ENCODE measurements at regions of chr2 and their contacts with region 1.

Region 1: DNA sequence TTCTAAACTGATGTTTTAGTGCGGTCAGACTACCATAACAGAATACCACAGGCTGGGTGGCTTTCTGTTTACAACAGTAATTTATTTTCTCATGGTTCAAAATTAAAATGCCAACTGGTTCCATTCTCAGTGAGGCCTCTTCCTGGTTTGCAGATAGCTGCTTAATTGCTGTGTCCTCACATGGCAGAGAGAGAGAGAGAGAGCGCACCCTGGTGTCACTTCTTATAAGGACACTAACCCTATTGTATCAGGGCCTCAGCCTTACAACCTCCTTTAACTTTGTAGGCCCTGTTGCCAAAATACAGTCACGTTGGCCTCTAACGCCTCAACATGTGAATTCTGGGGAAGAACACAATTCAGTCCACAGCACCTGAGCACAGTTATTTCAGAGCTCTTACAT is 37.5 kb upstream of the ZNF385B start:
- DNase-seq: peak; percentile 67
- ATAC-seq: peak; percentile 100
- H3K4me3 Mint-ChIP-seq: no peak overlapping the region
- H3K27ac Mint-ChIP-seq: no peak overlapping the region
- H3K4me1 Mint-ChIP-seq: peaks cover 4% of the 10 kb centered on the region
- H3K27me3 Mint-ChIP-seq: no peaks in the 10 kb centered on the region
- CTCF ChIP-seq: 0 out of 2 replicates have a peak, but pooled peaks have one; percentile 35

Region 2: GRCh38 chr2:179830043-179830787 is 68.7 kb before region 1 on chr2:
- CTCF ChIA-PET with region 1: no interaction called
- POLR2A ChIA-PET with region 1: no interaction called
- DNase-seq: no peak
- ATAC-seq: no peak
- H3K4me3 Mint-ChIP-seq: no peak overlapping the region
- H3K27ac Mint-ChIP-seq: no peak overlapping the region
- H3K4me1 Mint-ChIP-seq: peaks cover 31% of the 10 kb centered on the region
- H3K27me3 Mint-ChIP-seq: no peaks in the 10 kb centered on the region
- CTCF ChIP-seq: no peak

Region 3: DNA sequence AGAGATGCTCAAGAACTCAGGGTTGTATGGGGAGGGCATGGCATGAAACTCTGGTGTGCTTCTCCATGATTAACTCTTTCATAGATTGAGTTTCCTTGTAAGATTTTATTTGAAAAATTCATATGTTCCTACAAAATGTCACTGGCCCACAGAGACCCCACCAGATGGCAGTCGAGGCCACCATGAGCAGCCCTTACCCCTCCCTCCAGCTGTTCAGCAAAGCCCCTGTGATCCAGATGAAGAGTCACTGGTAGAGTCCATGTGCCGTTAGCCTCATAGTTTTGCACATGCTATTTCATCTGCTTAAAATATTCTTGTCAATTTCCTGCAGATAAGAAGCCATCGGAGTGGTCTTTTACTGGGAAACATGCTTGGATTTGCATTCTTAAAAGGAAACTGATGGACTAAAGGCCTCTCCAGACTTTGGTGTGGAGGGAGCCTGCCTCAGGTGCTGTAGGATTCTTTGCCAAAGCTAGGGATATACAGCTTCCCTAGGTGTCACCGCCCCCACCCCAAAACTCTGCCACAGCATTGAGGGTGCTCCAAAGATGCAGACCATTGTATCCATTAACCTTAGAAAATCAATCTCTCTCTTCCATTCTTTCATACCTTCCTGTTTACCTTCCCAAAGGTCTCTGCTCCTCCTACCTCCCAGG is 56.2 kb before region 1 on chr2:
- CTCF ChIA-PET with region 1: interaction called, 23 read pairs
- POLR2A ChIA-PET with region 1: no interaction called
- DNase-seq: peak; percentile 54
- ATAC-seq: peak; percentile 96
- H3K4me3 Mint-ChIP-seq: no peak overlapping the region
- H3K27ac Mint-ChIP-seq: no peak overlapping the region
- H3K4me1 Mint-ChIP-seq: peaks cover 11% of the 10 kb centered on the region
- H3K27me3 Mint-ChIP-seq: no peaks in the 10 kb centered on the region
- CTCF ChIP-seq: peak; percentile 36; the same call in 1 of the 2 replicates